ENCODE measurements at regions of chr1 and their contacts with region 1.

Region 1: DNA sequence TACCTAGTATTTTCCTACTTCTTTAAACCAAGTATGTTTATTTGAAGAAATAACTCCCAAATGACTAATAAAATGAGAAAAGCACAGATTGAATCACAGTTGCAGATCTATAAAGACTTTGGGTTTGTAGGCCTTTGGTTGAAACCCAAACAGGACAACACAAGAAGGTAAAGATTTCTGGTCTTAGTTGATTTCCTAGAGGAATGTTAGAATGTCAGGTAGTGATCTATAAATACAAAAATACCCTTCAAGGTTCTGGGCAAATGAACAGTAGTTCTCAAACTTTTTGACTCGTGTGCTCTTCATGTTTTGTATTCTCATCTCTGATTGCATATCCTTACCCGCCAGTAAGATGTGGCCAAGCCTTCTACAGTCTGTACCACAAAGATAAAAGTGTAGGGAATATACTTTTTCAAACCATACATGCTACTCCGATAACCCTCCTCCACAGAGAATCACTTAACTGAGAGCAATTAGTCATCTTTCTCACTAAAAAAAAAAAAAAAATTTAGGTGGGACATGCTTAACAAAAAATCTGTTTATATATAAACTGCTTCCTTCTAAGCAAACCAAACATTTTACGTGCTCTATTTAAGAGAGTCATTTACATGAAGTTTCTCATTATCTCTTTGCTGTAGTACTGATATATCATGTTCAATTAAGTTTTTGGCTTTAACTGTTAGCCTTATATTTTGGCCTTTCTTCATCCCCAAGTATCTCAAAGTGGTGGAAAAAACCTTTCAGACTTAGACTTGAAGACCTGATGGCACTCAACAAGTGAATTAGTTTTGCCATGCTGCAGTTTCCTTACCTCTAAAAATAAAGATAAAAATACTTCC is 36.0 kb downstream of the CNIH4 start:
- DNase-seq: no peak
- ATAC-seq: no peak
- H3K4me3 ChIP-seq: no peak overlapping the region
- H3K27ac ChIP-seq: no peak overlapping the region
- H3K4me1 ChIP-seq: peaks cover 0 to 2% (median 0%) of the 10 kb centered on the region in 12 donors
- H3K27me3 ChIP-seq: no peaks in the 10 kb centered on the region
- CTCF ChIP-seq: no peak
- POLR2A ChIP-seq: no peak

Region 2: DNA sequence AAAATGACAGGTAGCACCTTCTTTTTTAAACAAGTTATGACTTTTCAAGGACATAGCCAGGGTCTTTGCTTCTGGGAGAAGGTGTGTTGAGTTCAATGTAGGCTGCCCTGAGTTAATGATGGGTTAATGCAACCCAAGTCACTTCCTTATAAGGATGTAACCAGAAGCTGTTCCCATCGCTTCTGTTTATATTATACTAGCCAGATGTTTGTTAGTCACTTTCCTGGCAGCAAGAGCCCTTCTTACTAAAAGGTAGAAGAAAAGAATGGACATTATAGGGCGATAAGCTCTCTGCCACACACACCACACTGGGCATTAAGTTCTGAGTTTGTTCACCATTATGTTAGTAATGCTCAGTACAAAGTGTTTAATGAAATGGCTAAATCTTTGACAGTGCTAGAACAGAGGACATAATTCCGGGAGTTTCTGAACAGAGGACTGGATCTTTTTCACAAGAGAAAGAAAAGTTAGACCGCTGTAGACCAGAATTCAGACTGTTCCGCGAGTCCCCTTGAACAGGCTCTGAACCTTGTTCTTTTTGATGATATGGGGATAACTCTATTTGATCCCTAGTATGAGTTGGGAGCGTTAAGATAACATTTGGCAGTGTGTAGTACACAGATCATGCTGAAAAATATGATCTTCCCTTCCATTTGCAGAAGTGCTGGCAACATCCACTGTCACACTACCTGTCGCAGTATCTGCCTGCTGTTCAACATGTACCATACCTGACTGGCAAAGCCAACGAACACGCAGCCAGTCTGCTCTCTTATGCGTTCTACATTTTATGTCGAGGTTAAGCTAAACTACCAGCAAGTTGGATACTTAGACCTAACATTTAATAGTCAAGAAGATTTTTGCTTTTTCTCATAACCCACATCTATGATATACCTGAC is 168.6 kb before region 1 on chr1:
- intact Hi-C with region 1: no loop called
- DNase-seq: peak in 1 of 5 donors; percentile 2
- ATAC-seq: peak in 3 of 4 donors; percentile 22 to 57 (median 53)
- H3K4me3 ChIP-seq: no peak overlapping the region
- H3K27ac ChIP-seq: peak overlapping the region in 1 of 12 donors; percentile 52
- H3K4me1 ChIP-seq: peaks cover 0 to 14% (median 0%) of the 10 kb centered on the region in 12 donors
- H3K27me3 ChIP-seq: no peaks in the 10 kb centered on the region
- CTCF ChIP-seq: no peak
- POLR2A ChIP-seq: no peak

Region 3: GRCh38 chr1:224300314-224300713 is 92.3 kb before region 1 on chr1:
- intact Hi-C with region 1: loop called in 1 of 10 experiments (anchors 10 kb)
- DNase-seq: no peak
- ATAC-seq: no peak
- H3K4me3 ChIP-seq: no peak overlapping the region
- H3K27ac ChIP-seq: no peak overlapping the region
- H3K4me1 ChIP-seq: no peaks in the 10 kb centered on the region
- H3K27me3 ChIP-seq: no peaks in the 10 kb centered on the region
- CTCF ChIP-seq: no peak
- POLR2A ChIP-seq: no peak

Region 4: GRCh38 chr1:224427346-224427745 is 34.7 kb after region 1 on chr1:
- intact Hi-C with region 1: loop called in 1 of 10 experiments (anchors 5 kb)
- DNase-seq: no peak
- ATAC-seq: no peak
- H3K4me3 ChIP-seq: no peak overlapping the region
- H3K27ac ChIP-seq: peak overlapping the region in 2 of 12 donors; percentile 22 to 25
- H3K4me1 ChIP-seq: peaks cover 12 to 68% (median 35%) of the 10 kb centered on the region in 12 donors
- H3K27me3 ChIP-seq: no peaks in the 10 kb centered on the region
- CTCF ChIP-seq: no peak
- POLR2A ChIP-seq: no peak

Region 5: DNA sequence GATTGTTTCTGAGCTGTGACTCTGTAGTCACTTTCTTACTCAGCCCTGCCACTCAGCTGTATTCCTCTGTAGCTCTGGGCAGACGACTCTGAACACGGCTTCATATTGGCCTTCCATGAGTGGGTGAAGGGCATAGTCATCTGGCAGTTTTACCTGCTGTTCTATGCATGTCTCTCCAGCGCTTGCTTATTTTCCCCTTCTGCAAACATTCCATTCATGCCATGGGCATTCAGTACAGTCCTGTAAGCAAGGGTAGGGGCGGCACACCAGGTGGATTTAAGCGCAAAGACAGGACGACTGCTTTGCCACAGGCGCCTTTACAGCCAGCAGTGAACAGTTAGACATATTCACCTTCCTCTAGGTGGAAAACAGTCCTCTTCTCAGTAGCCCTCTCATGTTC is 46.4 kb after region 1 on chr1:
- intact Hi-C with region 1: no loop called
- DNase-seq: no peak
- ATAC-seq: no peak
- H3K4me3 ChIP-seq: no peak overlapping the region
- H3K27ac ChIP-seq: no peak overlapping the region
- H3K4me1 ChIP-seq: peaks cover 0 to 18% (median 10%) of the 10 kb centered on the region in 12 donors
- H3K27me3 ChIP-seq: no peaks in the 10 kb centered on the region
- CTCF ChIP-seq: no peak
- POLR2A ChIP-seq: no peak